Kidney (tissue), 22 donors: ENCODE measurements at regions of chr20 and their contacts with region 1.

Region 1: GRCh38 chr20:48523212-48523941 is 304.4 kb downstream of the PREX1 start:
- DNase-seq: peak in 4 of 5 donors; percentile 70 to 96 (median 91)
- H3K4me3 ChIP-seq: no peak overlapping the region
- H3K27ac ChIP-seq: no peak overlapping the region
- H3K4me1 ChIP-seq: no peaks in the 10 kb centered on the region
- H3K27me3 ChIP-seq: no peaks in the 10 kb centered on the region
- CTCF ChIP-seq: no peak

Region 2: DNA sequence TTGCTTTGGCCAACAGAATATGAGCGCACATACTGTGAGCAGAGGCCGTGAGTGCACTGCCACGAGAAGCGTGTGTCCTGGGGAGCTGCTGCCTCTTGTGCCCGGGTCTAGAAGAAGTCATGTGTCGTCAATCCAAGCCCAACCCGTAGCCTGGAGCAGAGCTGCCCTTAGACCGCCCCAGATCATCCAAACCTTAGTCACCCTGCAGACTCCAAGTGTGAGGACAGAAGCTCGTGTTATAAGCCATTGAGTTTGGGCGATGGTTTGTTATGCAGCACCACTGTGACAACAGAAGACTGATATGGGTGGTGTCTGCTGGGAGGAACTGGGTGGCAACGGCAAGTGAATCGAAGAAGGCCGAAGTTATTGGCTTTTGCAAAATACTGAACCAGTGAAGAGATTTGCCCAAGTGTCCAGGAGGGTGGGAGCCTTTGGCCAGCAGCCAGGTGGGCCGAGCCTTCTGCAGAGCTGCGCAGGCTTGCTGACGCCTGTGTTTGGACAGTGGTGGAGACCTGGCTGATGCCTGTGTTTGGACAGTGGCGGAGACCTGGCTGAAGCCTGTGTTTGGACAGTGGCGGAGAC is 636.8 kb before region 1 on chr20:
- intact Hi-C with region 1: loop called (anchors 10 kb)
- DNase-seq: no peak
- H3K4me3 ChIP-seq: no peak overlapping the region
- H3K27ac ChIP-seq: no peak overlapping the region
- H3K4me1 ChIP-seq: no peaks in the 10 kb centered on the region
- H3K27me3 ChIP-seq: no peaks in the 10 kb centered on the region
- CTCF ChIP-seq: no peak